ENCODE measurements at regions of chr13 and their contacts with region 1.

Region 1: DNA sequence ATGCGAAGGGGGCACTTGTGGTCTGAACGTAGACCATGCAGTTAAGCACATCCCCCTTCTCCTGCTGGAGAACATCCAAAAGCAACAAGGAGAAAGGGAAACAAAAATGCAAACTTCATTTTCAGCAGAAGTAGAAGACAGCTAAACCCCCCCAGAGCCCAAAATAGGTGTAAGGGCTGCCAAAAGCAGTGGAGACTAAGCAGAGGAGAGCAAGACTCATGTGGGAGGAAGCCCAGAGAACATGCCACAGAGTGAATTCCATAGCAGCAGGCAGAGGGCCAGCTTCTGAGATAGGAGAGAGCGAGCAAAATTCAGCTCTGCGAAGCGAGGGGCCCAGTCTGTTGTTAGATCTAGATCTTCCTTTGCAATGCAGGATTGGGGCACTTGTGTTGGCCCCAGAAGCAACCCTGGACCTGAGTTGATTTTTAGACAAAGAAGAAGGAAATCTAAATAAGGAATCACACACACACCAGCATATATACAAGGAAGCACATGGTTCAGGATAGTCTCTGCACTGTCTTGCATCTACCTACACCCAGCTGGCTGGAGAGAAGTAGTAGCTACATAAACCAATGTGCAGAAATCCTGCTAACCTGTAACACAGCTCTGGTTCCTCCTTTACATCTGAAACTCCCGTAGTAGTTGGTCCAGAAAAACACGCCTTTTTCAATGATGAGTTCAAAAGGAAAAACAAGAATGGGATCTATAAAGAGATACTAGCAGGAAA is 199.6 kb downstream of the SPRY2 start:
- DNase-seq: no peak
- ATAC-seq: peak in 1 of 2 donors; percentile 56
- H3K4me3 ChIP-seq: peak overlapping the region in 1 of 4 donors; percentile 8
- H3K27ac ChIP-seq: peak overlapping the region in 3 of 4 donors; percentile 18 to 53 (median 18)
- H3K4me1 ChIP-seq: peaks cover 9 to 18% of the 10 kb centered on the region in 2 donors
- H3K27me3 ChIP-seq: no peaks in the 10 kb centered on the region
- CTCF ChIP-seq: no peak
- POLR2A ChIP-seq: no peak

Region 2: GRCh38 chr13:80284290-80284689 is 143.0 kb after region 1 on chr13:
- in situ Hi-C with region 1: loop called in 1 of 4 experiments (anchors 10 kb)
- intact Hi-C with region 1: no loop called
- DNase-seq: no peak
- ATAC-seq: no peak
- H3K4me3 ChIP-seq: no peak overlapping the region
- H3K27ac ChIP-seq: no peak overlapping the region
- H3K4me1 ChIP-seq: no peaks in the 10 kb centered on the region
- H3K27me3 ChIP-seq: no peaks in the 10 kb centered on the region
- CTCF ChIP-seq: no peak
- POLR2A ChIP-seq: no peak

Measured in gastrocnemius medialis (tissue), 4 donors.